ENCODE measurements at regions of chr12 and their contacts with region 1.

Region 1: GRCh38 chr12:6752921-6753771 is at the start of gene MLF2:
- DNase-seq: peak; percentile 98
- ATAC-seq: peak; percentile 87
- H3K4me3 ChIP-seq: peak within 1 kb of the TSS; percentile 75 to 93 (median 79)
- H3K4me3 Mint-ChIP-seq: peak within 1 kb of the TSS; percentile 96
- H3K27ac ChIP-seq: peak within 1 kb of the TSS; percentile 93 to 96
- H3K27ac Mint-ChIP-seq: peak within 1 kb of the TSS; percentile 99
- H3K4me1 ChIP-seq: peaks cover 13 to 14% of the 10 kb centered on the region in 2 donors
- H3K4me1 Mint-ChIP-seq: peaks cover 17% of the 10 kb centered on the region
- H3K27me3 ChIP-seq: no peaks in the 10 kb centered on the region
- H3K27me3 Mint-ChIP-seq: peaks cover 4% of the 10 kb centered on the region
- CTCF ChIP-seq: peak; percentile 89
- total RNA-seq, gene MLF2: 97.2 and 106 TPM in 2 replicates

Region 2: GRCh38 chr12:6662906-6663742 is 90.0 kb before region 1 on chr12 and contains the start of gene ING4:
- CTCF ChIA-PET with region 1: interaction called, 3 read pairs
- POLR2A ChIA-PET with region 1: no interaction called
- intact Hi-C with region 1: loop called (anchors 1 kb)
- DNase-seq: peak; percentile 99
- ATAC-seq: peak; percentile 98
- H3K4me3 ChIP-seq: peak within 1 kb of the TSS; percentile 62 to 94 (median 90)
- H3K4me3 Mint-ChIP-seq: peak within 1 kb of the TSS; percentile 93
- H3K27ac ChIP-seq: peak within 1 kb of the TSS; percentile 64 to 91
- H3K27ac Mint-ChIP-seq: peak within 1 kb of the TSS; percentile 92
- H3K4me1 ChIP-seq: peaks cover 15 to 19% of the 10 kb centered on the region in 2 donors
- H3K4me1 Mint-ChIP-seq: peaks cover 27% of the 10 kb centered on the region
- H3K27me3 ChIP-seq: no peaks in the 10 kb centered on the region
- H3K27me3 Mint-ChIP-seq: no peaks in the 10 kb centered on the region
- CTCF ChIP-seq: no peak
- total RNA-seq, gene ING4: 81.1 TPM in 2 replicates

Region 3: GRCh38 chr12:6773590-6774351 is 20.6 kb after region 1 on chr12:
- CTCF ChIA-PET with region 1: interaction called, 109 read pairs
- POLR2A ChIA-PET with region 1: interaction called, 11 read pairs
- intact Hi-C with region 1: no loop called
- DNase-seq: no peak
- ATAC-seq: no peak
- H3K4me3 ChIP-seq: no peak overlapping the region
- H3K4me3 Mint-ChIP-seq: no peak overlapping the region
- H3K27ac ChIP-seq: no peak overlapping the region
- H3K27ac Mint-ChIP-seq: no peak overlapping the region
- H3K4me1 ChIP-seq: peaks cover 27 to 37% of the 10 kb centered on the region in 2 donors
- H3K4me1 Mint-ChIP-seq: peaks cover 18% of the 10 kb centered on the region
- H3K27me3 ChIP-seq: peaks cover 0 to 80% (median 43%) of the 10 kb centered on the region in 4 experiments
- H3K27me3 Mint-ChIP-seq: peaks cover 66% of the 10 kb centered on the region
- CTCF ChIP-seq: no peak

Region 4: DNA sequence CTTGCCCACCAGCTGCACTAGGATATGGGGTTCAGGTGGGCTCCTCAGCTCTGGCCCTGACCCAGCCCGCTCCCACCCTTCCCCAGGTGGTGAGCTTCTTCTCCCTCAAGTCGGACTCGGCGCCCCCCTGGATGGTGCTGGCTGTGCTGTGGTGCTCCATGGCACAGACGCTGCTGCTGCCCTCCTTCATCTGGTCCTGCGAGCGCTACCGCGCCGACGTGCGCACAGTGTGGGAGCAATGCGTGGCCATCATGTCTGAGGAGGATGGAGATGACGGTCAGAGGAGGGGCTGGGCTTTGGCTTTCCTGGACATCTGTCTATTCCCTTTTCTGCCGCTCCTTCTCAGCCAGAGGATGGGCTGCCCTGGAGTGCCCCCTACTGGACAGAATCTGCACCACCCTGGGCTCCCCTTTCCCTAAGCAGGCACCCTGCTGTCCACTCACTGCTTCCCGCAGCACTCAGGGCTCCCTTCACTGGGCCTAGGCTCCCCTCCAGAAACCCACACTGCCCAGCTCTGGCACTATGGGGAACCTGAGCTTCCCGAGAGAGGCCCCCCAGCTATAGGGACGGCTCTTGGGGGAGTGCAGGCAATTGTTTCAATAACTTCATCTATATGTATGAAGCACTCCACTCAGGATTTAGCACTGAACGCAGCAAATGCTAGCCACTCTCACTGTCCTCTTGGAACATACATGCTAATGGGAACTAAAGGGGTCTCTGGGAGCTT is 72.4 kb after region 1 on chr12:
- CTCF ChIA-PET with region 1: interaction called, 33 read pairs
- POLR2A ChIA-PET with region 1: interaction called, 4 read pairs
- intact Hi-C with region 1: loop called (anchors 1 kb)
- DNase-seq: peak; percentile 80
- ATAC-seq: peak; percentile 66
- H3K4me3 ChIP-seq: no peak overlapping the region
- H3K4me3 Mint-ChIP-seq: no peak overlapping the region
- H3K27ac ChIP-seq: no peak overlapping the region
- H3K27ac Mint-ChIP-seq: no peak overlapping the region
- H3K4me1 ChIP-seq: peaks cover 37 to 40% of the 10 kb centered on the region in 2 donors
- H3K4me1 Mint-ChIP-seq: peaks cover 31% of the 10 kb centered on the region
- H3K27me3 ChIP-seq: peaks cover 0 to 82% (median 41%) of the 10 kb centered on the region in 4 experiments
- H3K27me3 Mint-ChIP-seq: peaks cover 78% of the 10 kb centered on the region
- CTCF ChIP-seq: peak; percentile 86

Region 5: DNA sequence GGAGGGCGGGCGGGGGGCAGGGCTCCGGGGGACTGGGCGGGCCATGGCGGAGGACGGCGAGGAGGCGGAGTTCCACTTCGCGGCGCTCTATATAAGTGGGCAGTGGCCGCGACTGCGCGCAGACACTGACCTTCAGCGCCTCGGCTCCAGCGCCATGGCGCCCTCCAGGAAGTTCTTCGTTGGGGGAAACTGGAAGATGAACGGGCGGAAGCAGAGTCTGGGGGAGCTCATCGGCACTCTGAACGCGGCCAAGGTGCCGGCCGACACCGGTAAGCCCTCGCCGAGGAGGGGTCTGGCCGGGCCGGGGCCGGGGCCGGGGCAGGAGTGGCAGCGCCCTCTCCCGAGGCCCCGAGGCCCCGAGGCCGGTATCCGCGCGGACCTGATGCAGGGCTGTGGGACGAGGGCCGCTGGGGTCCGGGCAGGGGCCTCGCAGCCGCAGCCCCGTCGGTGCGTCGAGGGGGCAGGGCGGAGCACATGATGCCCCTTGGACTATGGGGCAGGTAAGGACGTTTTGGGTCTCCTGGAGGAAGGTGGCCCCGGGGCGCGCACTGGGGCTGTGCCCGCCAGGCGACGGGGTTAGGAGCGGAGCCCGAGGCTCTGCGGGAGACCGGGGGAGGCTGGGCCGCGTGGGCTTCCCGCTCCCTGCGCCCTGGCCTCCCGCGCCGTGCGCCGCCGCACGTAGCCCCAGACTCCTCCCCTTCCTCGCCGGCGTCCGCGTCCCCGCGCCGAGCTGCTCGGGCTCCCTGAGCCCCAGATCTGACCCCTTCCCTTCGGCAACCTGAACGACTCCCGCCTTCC is 114.5 kb after region 1 on chr12 and contains the start of gene TPI1:
- CTCF ChIA-PET with region 1: interaction called, 22 read pairs
- POLR2A ChIA-PET with region 1: interaction called, 10 read pairs
- intact Hi-C with region 1: loop called (anchors 1 kb)
- DNase-seq: peak; percentile 83
- ATAC-seq: peak; percentile 83
- H3K4me3 ChIP-seq: peak within 1 kb of the TSS; percentile 56 to 88 (median 68)
- H3K4me3 Mint-ChIP-seq: peak within 1 kb of the TSS; percentile 96
- H3K27ac ChIP-seq: peak within 1 kb of the TSS; percentile 70 to 77
- H3K27ac Mint-ChIP-seq: peak within 1 kb of the TSS; percentile 97
- H3K4me1 ChIP-seq: peaks cover 33 to 41% of the 10 kb centered on the region in 2 donors
- H3K4me1 Mint-ChIP-seq: peaks cover 50% of the 10 kb centered on the region
- H3K27me3 ChIP-seq: no peaks in the 10 kb centered on the region
- H3K27me3 Mint-ChIP-seq: no peaks in the 10 kb centered on the region
- CTCF ChIP-seq: no peak
- total RNA-seq, gene TPI1: 178 and 181 TPM in 2 replicates

Measured in B cell (primary cell).